Heart left ventricle (tissue), 16 donors: ENCODE measurements at regions of chr4 and their contacts with region 1.

Region 1: DNA sequence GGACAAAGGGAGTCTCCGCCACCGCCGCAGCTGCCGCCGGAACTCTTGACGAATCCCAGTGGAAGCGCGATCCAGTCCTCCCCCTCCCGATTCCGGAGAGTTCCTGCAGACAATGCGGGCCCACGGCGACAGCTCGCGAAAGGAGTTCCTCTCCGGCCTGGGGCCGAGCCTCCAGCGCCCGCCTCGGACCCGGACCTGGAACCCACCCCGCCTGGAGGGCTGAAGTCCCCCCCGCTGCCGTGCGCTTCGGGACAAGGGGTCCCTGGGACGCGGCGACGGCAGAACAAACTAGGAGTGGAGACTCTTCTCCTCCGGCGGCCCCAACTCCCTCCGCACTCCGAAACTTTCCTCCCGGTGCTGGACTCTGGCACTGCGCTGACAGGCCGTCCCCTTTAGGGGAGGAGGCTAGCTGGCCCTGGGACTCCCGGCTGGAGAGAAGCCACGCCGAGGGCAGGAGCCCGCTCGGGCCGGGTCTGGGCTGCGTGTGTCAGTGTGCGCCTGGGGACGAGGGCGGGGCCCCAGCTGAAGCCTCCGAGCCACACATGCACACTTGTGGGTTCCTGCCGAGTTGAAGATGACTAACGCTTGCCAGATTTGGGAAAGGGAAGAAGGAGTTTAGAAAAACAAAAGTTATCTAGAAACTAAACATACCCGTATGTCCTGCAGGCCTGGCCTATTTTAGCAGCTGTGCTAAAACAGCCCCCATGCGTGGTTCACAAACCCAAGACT is at the start of gene ANTXR2:
- DNase-seq: peak; percentile 89 to 97 (median 95)
- ATAC-seq: peak; percentile 95 to 98 (median 96)
- H3K4me3 ChIP-seq: peak within 1 kb of the TSS; percentile 50 to 96 (median 92)
- H3K27ac ChIP-seq: peak within 1 kb of the TSS; percentile 86 to 99 (median 93)
- H3K4me1 ChIP-seq: peaks cover 0 to 75% (median 16%) of the 10 kb centered on the region in 12 donors
- H3K27me3 ChIP-seq: no peaks in the 10 kb centered on the region
- CTCF ChIP-seq: peak in 4 of 12 donors; percentile 9 to 30 (median 20)
- POLR2A ChIP-seq: peak in 1 of 2 donors; percentile 75
- total RNA-seq, gene ANTXR2: 33.3 to 76.7 (median 48.7) TPM

Region 2: GRCh38 chr4:79042079-79042674 is 1030.7 kb before region 1 on chr4:
- intact Hi-C with region 1: loop called in 1 of 10 experiments (anchors 5 kb)
- DNase-seq: no peak
- ATAC-seq: peak in 3 of 4 donors; percentile 44 to 64 (median 61)
- H3K4me3 ChIP-seq: no peak overlapping the region
- H3K27ac ChIP-seq: no peak overlapping the region
- H3K4me1 ChIP-seq: peaks cover 0 to 4% (median 0%) of the 10 kb centered on the region in 12 donors
- H3K27me3 ChIP-seq: no peaks in the 10 kb centered on the region
- CTCF ChIP-seq: peak; percentile 32 to 70 (median 56)
- POLR2A ChIP-seq: no peak

Region 3: DNA sequence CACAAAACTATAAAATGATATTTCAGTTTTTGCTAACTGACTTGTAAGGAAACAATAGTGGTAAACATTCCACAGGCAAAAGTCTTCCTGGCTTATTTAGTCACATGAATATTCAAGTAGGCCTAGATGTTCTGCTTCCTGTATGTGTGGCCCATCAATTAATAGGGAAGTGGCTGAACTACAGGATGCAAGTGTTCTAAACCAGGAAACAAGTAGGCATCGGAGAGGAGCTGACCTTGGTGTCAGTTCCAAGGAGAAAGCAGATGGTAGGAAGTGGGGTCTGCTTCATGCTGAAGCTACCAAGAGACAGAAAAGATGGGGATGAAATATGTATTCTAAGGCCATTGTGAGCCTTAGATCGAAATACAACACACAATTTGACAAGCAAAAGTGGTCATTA is 149.6 kb before region 1 on chr4:
- intact Hi-C with region 1: loop called in 2 of 10 experiments (anchors 10 kb)
- DNase-seq: no peak
- ATAC-seq: no peak
- H3K4me3 ChIP-seq: no peak overlapping the region
- H3K27ac ChIP-seq: no peak overlapping the region
- H3K4me1 ChIP-seq: no peaks in the 10 kb centered on the region
- H3K27me3 ChIP-seq: no peaks in the 10 kb centered on the region
- CTCF ChIP-seq: no peak
- POLR2A ChIP-seq: no peak

Region 4: DNA sequence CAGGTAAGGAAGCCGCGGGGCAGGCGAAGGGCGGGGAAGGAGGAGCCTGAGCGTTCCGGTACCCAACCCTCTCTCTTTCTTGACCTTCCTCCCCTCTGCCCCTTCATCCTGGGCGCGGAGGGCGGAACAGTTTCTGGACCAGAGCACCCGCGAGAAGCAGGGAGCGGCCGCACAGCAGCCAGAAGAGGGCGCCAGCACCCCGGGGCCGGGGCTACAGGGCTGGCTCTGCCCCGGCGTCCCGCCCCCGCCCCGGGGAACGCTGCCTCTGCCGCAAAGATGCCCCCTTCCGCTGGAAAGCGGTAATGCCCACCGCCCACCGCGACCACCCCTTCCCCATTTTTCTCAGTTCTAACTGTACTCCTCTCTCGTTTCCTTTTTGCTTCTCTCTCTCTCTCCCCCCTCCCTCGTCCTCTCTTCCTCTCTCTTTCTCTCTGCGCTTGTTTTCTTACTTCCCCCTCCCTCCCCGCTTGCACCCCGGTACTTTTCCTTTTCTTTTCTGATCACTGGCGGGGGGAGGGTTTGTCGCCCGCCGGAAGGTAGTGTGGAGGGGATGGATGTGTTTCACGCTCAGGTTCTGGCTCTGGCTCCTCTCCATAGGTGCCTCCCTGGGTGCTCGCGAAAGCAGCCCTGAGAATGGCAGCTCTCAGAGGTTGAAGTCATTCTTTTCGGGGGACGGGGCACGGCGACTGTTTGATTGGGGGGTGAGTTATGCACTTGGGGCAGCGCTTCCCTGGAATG is 111.3 kb after region 1 on chr4:
- intact Hi-C with region 1: loop called in 7 of 10 experiments (anchors 2 to 10 kb)
- DNase-seq: peak; percentile 85 to 95 (median 88)
- ATAC-seq: peak; percentile 82 to 98 (median 96)
- H3K4me3 ChIP-seq: peak overlapping the region; percentile 38 to 80 (median 63)
- H3K27ac ChIP-seq: peak overlapping the region in 10 of 12 donors; percentile 23 to 83 (median 66)
- H3K4me1 ChIP-seq: peaks cover 0 to 45% (median 21%) of the 10 kb centered on the region in 12 donors
- H3K27me3 ChIP-seq: peaks cover 14 to 55% (median 42%) of the 10 kb centered on the region in 9 donors
- CTCF ChIP-seq: peak; percentile 71 to 98 (median 90)
- POLR2A ChIP-seq: no peak

Region 5: DNA sequence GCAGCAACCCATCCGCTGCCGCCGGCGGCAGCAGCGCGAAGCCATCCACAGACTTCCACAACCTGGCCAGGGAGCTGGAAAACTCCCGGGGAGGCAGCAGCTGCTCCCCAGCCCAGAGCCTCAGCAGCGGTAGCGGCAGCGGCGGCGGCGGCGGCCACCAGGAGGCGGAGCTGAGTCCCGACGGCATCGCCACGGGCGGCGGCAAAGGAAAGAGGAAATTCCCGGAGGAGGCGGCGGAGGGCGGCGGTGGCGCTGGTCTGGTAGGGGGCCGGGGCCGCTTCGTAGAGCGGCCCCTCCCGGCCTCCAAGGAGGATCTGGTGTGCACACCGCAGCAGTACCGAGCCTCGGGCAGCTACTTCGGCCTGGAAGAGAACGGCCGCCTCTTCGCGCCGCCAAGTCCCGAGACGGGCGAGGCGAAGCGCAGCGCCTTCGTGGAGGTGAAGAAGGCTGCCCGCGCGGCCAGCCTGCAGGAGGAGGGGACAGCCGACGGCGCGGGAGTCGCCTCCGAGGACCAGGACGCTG is 129.3 kb after region 1 on chr4:
- intact Hi-C with region 1: loop called in 2 of 10 experiments (anchors 5 to 10 kb)
- DNase-seq: peak; percentile 82 to 94 (median 86)
- ATAC-seq: peak; percentile 62 to 90 (median 84)
- H3K4me3 ChIP-seq: peak overlapping the region; percentile 42 to 69 (median 62)
- H3K27ac ChIP-seq: peak overlapping the region in 11 of 12 donors; percentile 10 to 91 (median 57)
- H3K4me1 ChIP-seq: peaks cover 0 to 33% (median 10%) of the 10 kb centered on the region in 12 donors
- H3K27me3 ChIP-seq: peaks cover 0 to 60% (median 38%) of the 10 kb centered on the region in 9 donors
- CTCF ChIP-seq: peak; percentile 69 to 92 (median 84)
- POLR2A ChIP-seq: no peak

Region 6: GRCh38 chr4:80619070-80619674 is 546.3 kb after region 1 on chr4:
- intact Hi-C with region 1: no loop called
- DNase-seq: no peak
- ATAC-seq: no peak
- H3K4me3 ChIP-seq: no peak overlapping the region
- H3K27ac ChIP-seq: no peak overlapping the region
- H3K4me1 ChIP-seq: no peaks in the 10 kb centered on the region
- H3K27me3 ChIP-seq: no peaks in the 10 kb centered on the region
- CTCF ChIP-seq: no peak
- POLR2A ChIP-seq: no peak

Region 7: GRCh38 chr4:80841587-80842281 is 768.8 kb after region 1 on chr4:
- intact Hi-C with region 1: no loop called
- DNase-seq: no peak
- ATAC-seq: no peak
- H3K4me3 ChIP-seq: no peak overlapping the region
- H3K27ac ChIP-seq: no peak overlapping the region
- H3K4me1 ChIP-seq: no peaks in the 10 kb centered on the region
- H3K27me3 ChIP-seq: no peaks in the 10 kb centered on the region
- CTCF ChIP-seq: no peak
- POLR2A ChIP-seq: no peak

Region 8: DNA sequence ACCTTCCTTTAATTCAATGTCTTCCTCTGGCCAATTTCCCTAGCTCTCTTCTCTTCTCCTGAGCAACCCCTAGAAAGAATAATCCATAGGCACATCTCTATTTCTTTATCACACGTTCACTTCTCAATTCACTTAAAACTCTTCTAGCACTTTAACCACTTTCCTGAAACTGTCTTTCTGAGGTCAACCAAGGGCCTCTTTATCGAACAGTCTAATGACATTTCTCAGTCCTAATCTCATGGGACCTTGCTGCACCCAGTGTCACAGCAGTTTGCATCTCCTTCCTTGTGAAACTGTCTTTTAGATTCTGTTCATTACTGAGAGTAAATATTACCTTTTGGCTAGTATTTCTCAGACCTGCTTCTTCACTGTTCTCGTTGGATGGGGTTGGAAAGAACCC is 1684.1 kb after region 1 on chr4:
- intact Hi-C with region 1: no loop called
- DNase-seq: no peak
- ATAC-seq: no peak
- H3K4me3 ChIP-seq: no peak overlapping the region
- H3K27ac ChIP-seq: no peak overlapping the region
- H3K4me1 ChIP-seq: no peaks in the 10 kb centered on the region
- H3K27me3 ChIP-seq: no peaks in the 10 kb centered on the region
- CTCF ChIP-seq: no peak
- POLR2A ChIP-seq: no peak